ENCODE measurements at regions of chr5 and their contacts with region 1.

Region 1: DNA sequence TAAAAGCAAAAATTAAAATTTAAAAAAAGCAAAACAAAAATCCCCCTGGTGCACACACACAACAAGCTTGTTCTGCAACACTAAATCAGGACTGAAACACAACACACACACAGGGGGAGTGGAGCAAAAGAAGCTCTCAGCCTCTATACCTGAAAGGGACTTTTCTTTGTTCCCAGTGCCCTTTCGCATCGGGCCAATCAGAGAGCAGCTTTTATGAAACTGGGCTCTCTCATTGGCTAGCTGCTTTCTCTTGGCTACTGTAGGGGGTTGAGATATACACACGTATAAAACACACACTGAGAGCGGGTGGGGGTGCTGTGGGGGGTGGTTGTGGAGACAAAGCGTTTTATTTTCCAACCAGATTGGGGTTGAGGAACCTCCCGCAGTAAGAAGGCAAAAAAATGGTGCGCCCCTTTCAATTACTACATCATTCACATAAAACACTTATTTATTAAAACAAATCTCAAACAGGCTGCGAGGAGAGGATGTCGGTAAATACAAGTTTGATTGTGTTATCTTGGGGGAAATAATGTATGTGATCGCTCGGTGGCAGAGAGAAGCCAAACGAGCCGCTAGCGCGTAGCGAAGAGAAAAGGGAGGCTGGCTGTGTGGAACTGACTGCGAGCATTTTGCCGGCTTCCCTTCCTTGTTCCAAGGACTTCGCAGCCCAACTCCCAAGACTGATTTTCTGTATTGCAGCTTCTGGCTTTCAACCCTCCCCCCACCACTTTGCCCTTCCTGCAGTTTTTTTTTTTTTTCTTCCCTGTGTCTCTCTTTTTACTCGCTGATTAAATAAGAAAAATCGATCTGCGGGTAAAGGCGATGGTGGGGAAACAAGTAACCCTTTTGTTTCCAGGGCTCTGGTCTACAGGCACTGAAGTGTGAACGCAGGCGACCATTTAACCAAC is 2.5 kb upstream of the ZNF608 start:
- DNase-seq: peak; percentile 30 to 84
- ATAC-seq: peak; percentile 73 to 91 (median 88)
- H3K4me3 ChIP-seq: peak overlapping the region; percentile 48 to 81 (median 68)
- H3K27ac ChIP-seq: peak overlapping the region; percentile 76 to 98 (median 92)
- H3K4me1 ChIP-seq: peaks cover 0 to 40% (median 8%) of the 10 kb centered on the region in 9 donors
- H3K27me3 ChIP-seq: peaks cover 0 to 36% (median 0%) of the 10 kb centered on the region in 7 donors
- CTCF ChIP-seq: peak in 2 of 9 donors; percentile 2 to 13

Region 2: DNA sequence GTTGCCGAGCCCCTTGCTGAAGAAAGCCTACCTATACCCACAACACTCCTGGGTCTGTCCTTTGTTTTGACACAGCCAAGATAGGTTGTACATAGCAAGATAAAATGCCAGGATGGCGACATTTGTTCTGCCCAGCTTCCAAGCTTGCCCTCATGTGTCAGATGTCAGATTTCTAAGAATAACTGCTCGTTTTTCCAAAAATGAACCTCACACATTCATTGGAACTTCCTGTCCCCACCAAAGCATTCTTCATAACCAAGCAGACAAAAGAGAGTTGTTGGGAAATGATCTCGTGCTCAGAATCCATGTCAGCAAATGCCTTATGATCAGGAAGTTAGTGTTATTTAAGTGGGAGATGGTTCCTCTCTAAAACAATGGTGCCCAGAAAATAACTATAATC is 212.6 kb before region 1 on chr5:
- intact Hi-C with region 1: loop called in 4 of 10 experiments (anchors 5 to 10 kb)
- DNase-seq: no peak
- ATAC-seq: peak in 6 of 8 donors; percentile 34 to 82 (median 68)
- H3K4me3 ChIP-seq: no peak overlapping the region
- H3K27ac ChIP-seq: peak overlapping the region in 7 of 10 donors; percentile 23 to 55 (median 53)
- H3K4me1 ChIP-seq: peaks cover 0 to 35% (median 15%) of the 10 kb centered on the region in 9 donors
- H3K27me3 ChIP-seq: no peaks in the 10 kb centered on the region
- CTCF ChIP-seq: no peak

Region 3: DNA sequence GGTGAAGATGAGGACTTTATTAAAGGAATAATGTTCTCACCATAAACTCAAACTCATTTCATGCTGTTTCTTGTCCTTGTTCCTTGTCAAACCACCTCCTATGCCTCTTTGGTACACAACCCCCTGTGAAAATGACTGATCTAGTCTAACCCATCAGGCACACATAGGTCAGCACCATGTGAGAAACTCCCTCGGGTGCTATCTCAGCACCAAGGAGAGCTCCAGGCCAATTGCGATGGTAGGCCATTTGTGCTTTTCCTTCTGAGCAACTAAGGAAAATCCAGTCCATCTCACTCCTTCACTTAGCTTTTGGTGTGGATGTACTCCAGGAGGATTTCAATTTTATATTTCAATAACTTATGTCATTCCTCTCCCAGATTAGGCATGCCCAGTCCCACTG is 202.3 kb before region 1 on chr5:
- intact Hi-C with region 1: no loop called
- DNase-seq: no peak
- ATAC-seq: no peak
- H3K4me3 ChIP-seq: no peak overlapping the region
- H3K27ac ChIP-seq: no peak overlapping the region
- H3K4me1 ChIP-seq: peaks cover 0 to 8% (median 4%) of the 10 kb centered on the region in 9 donors
- H3K27me3 ChIP-seq: no peaks in the 10 kb centered on the region
- CTCF ChIP-seq: no peak

Region 4: GRCh38 chr5:124706729-124707361 is 42.1 kb before region 1 on chr5:
- intact Hi-C with region 1: loop called in 3 of 10 experiments (anchors 5 kb)
- DNase-seq: peak; percentile 27 to 68
- ATAC-seq: peak; percentile 64 to 79 (median 72)
- H3K4me3 ChIP-seq: peak overlapping the region in 5 of 10 donors; percentile 12 to 28 (median 21)
- H3K27ac ChIP-seq: peak overlapping the region in 7 of 10 donors; percentile 2 to 62 (median 15)
- H3K4me1 ChIP-seq: peaks cover 5 to 88% (median 57%) of the 10 kb centered on the region in 9 donors
- H3K27me3 ChIP-seq: no peaks in the 10 kb centered on the region
- CTCF ChIP-seq: no peak

Region 5: GRCh38 chr5:125043781-125044391 is 294.9 kb after region 1 on chr5:
- intact Hi-C with region 1: loop called in 1 of 10 experiments (anchors 5 kb)
- DNase-seq: peak; percentile 67 to 81
- ATAC-seq: peak; percentile 83 to 97 (median 92)
- H3K4me3 ChIP-seq: no peak overlapping the region
- H3K27ac ChIP-seq: peak overlapping the region in 4 of 10 donors; percentile 10 to 55 (median 22)
- H3K4me1 ChIP-seq: peaks cover 4 to 37% (median 30%) of the 10 kb centered on the region in 9 donors
- H3K27me3 ChIP-seq: no peaks in the 10 kb centered on the region
- CTCF ChIP-seq: no peak

Region 6: GRCh38 chr5:125412561-125413495 is 663.9 kb after region 1 on chr5:
- intact Hi-C with region 1: loop called in 1 of 10 experiments (anchors 5 kb)
- DNase-seq: peak; percentile 53 to 58
- ATAC-seq: peak; percentile 77 to 92 (median 87)
- H3K4me3 ChIP-seq: peak overlapping the region in 5 of 10 donors; percentile 18 to 34 (median 28)
- H3K27ac ChIP-seq: peak overlapping the region in 5 of 10 donors; percentile 32 to 74 (median 50)
- H3K4me1 ChIP-seq: peaks cover 0 to 51% (median 37%) of the 10 kb centered on the region in 9 donors
- H3K27me3 ChIP-seq: no peaks in the 10 kb centered on the region
- CTCF ChIP-seq: peak in 7 of 9 donors; percentile 25 to 64 (median 44)